Heart right ventricle (tissue), 16 donors: ENCODE measurements at regions of chr17 and their contacts with region 1.

Region 1: DNA sequence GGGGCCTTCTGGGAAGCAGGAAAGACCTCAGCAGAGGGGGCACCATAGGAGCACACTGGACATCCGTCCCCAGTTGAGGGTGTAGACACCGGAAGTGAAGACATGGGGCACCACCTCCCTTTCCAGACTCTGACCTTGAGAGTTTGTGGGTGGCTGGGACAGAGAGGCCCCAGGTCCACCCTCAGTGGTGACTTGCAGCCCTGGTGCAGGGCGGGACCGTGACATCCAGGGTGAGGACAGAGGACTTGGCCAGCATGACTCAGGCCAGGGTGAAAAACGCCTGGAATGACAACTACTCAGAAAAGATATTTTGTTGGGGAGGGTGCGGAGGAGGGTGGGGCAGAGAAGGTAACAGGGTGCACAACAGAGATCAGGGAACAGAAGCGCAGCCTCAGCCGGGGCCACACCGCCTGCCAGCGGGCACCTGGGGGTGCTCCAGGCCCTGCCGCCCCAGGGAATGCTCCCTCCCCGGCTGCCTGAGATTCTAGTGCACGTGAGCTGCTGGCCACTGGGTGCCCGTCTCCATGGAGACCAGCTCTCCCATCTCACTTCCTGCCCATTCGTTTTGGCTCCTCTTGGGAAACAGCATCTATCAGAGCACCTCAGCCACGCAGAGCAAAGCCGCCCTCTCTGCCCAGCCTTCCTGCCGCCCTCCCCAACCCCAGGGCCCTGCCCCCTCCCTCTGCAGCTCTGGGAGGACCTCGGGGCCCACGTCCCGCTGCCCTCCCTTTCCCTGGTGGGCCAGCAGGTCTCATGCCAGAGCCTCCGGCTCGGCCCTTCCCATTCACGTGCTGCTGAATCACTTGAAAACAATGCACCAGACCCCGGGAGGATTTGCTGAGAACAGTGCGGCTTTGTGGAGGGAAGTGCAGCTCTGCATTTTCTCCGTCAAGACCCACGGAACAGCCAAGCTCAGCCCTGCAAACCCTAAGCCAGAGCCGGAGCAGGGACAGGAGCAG is 19.6 kb downstream of the CEP295NL start:
- DNase-seq: peak; percentile 77 to 85
- ATAC-seq: peak; percentile 59 to 80 (median 72)
- H3K4me3 ChIP-seq: peak overlapping the region in 9 of 10 donors; percentile 14 to 44 (median 36)
- H3K27ac ChIP-seq: peak overlapping the region; percentile 91 to 98 (median 96)
- H3K4me1 ChIP-seq: peaks cover 29 to 84% (median 73%) of the 10 kb centered on the region in 9 donors
- H3K27me3 ChIP-seq: no peaks in the 10 kb centered on the region
- CTCF ChIP-seq: no peak

Region 2: GRCh38 chr17:78933959-78934568 is 50.6 kb after region 1 on chr17:
- intact Hi-C with region 1: loop called in 3 of 10 experiments (anchors 5 kb)
- DNase-seq: peak; percentile 92 to 94
- ATAC-seq: peak; percentile 81 to 92 (median 89)
- H3K4me3 ChIP-seq: peak overlapping the region in 7 of 10 donors; percentile 23 to 46 (median 39)
- H3K27ac ChIP-seq: peak overlapping the region; percentile 69 to 88 (median 84)
- H3K4me1 ChIP-seq: peaks cover 11 to 42% (median 26%) of the 10 kb centered on the region in 9 donors
- H3K27me3 ChIP-seq: no peaks in the 10 kb centered on the region
- CTCF ChIP-seq: no peak

Region 3: DNA sequence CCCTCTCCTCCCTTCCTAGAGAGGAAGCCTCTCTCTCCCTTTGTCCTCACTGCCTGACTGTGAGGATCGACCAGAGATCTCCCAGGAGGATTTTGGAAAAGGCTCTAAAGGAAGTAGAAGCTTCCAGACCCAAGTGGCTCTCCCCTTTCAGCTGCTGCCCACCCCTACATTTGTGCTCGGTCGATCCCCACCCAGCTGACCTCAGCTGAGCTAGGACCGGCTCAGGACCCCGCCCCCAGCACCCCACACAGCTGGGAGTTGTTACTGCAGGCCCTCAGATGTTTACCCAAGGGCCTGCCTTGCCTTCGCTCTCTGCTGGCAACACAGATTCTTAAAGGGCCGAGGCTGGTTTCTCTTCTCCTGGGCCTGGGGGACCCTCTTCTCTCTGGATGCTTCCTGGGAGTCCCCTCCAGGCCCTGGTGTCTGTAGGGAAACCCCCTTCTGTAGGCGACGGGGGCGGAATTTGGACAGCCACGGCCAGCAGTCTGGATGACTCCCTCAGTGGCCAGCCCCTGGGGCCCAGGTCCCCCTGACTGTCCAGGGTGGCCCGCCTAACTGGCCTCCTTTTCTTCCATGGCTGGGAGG is 68.6 kb after region 1 on chr17:
- intact Hi-C with region 1: no loop called
- DNase-seq: no peak
- ATAC-seq: peak in 7 of 8 donors; percentile 36 to 74 (median 56)
- H3K4me3 ChIP-seq: peak overlapping the region in 1 of 10 donors; percentile 2
- H3K27ac ChIP-seq: peak overlapping the region in 4 of 10 donors; percentile 36 to 69 (median 58)
- H3K4me1 ChIP-seq: peaks cover 0 to 28% (median 11%) of the 10 kb centered on the region in 9 donors
- H3K27me3 ChIP-seq: no peaks in the 10 kb centered on the region
- CTCF ChIP-seq: no peak